Gastrocnemius medialis (tissue), 4 donors: ENCODE measurements at regions of chr20 and their contacts with region 1.

Region 1: DNA sequence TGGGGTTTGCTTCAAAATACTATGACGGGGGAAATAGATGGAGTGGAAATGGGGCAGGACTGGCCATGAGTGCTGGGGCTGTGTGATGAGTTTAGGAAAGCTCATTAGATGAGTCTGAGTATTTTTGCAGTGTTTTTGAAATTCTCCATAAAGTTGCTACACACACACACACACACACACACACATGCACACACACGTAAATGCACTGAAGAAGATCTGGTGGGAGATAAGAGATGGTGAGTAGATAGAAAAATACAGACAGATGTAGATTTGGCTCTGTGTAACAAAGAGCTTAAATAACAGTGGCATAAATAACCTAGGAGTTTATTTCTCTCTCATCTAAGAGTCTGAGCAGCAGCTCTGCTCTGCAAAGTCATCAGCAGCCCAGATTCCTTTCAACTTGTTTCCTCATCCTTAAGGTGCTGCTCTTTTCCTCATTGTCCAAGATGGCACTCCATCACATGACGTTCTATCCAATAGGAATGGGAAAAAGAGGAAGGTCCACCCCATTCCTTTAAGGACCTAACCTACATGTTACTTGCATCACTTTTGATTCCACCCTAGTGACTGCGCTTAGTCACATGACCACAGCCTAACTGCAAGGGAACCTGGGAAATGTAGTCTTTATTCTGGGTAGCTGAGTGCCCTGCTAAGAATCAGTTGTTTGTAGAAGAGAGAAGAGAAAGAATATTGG is 76.4 kb downstream of the EYA2 start:
- DNase-seq: no peak
- ATAC-seq: no peak
- H3K4me3 ChIP-seq: no peak overlapping the region
- H3K27ac ChIP-seq: no peak overlapping the region
- H3K4me1 ChIP-seq: no peaks in the 10 kb centered on the region
- H3K27me3 ChIP-seq: no peaks in the 10 kb centered on the region
- CTCF ChIP-seq: no peak
- POLR2A ChIP-seq: no peak

Region 2: DNA sequence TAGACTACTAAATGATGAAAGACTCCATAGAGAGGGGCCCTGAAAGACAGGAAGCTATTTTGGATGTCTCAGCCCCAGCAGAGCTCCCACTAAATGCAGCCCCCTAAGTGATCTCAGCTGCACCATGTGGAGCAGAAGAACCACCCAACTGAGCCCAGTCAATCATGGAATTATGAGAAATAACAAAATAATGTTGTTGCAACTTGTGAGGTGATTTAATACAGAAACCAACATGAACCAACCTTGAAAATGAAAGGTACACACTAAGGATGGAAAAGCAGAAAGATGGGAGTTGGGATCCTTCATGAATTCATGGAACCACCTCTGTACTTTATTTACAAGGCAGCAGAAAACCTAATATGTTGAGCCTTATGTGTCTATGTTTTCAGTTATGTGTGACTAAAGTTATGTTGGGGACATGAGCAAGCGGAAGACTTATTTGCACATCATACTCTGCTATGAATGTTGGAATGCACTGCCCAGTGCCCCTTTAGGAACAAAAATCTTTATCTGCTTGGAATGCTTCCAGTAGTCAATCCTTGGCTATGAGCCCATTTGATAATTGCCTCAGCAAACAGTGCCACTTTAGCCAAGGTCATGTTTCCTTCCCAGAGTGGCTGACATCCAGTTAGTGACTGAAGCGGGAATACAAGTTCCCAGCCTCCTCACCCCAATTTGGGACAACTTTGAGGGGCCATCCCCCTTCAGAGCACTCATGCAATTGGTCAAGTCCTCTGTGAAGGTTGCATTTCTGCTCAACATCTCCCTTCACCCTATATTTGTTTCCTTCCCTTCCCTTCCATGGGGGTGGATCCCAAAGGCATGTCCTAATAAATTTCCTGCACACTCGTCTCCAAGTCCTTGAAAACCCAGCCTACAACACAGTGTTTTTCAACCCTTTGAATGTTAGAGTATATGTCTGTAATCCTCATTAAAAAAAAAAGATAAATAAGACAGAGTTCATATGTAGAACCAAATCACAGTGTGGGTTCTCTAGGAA is 300.2 kb before region 1 on chr20:
- in situ Hi-C with region 1: no loop called
- intact Hi-C with region 1: no loop called
- DNase-seq: no peak
- ATAC-seq: no peak
- H3K4me3 ChIP-seq: no peak overlapping the region
- H3K27ac ChIP-seq: no peak overlapping the region
- H3K4me1 ChIP-seq: no peaks in the 10 kb centered on the region
- H3K27me3 ChIP-seq: no peaks in the 10 kb centered on the region
- CTCF ChIP-seq: no peak
- POLR2A ChIP-seq: no peak

Region 3: DNA sequence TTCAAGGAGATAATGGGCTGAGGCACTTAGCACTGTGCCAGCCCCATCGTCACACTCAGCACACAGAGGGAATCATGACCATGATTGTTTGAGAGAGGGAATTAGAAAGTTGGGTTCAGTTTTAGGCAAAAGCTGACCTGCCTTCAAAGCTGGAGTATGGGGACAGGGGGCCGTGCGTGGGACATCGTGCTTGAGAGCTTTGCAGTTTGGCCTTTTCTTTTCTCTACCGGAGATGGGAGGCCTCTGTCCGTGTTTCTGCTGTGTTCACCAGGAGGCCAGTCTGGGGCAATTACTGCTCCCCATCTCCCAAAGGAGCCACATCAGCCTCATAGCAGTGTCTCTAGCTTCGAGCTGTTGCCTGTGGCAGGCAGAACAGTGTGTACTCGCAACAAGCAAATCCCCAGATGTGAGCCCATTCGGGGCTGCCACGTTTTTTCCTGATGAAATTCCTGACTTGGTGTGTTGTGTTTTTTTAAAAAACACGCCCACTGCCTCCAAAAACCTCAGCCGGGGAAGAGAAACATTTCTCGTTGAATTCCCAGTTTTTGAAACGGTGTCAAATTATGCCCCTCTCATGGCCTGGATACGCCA is 56.2 kb before region 1 on chr20:
- in situ Hi-C with region 1: no loop called
- intact Hi-C with region 1: loop called (anchors 10 kb)
- DNase-seq: peak; percentile 62 to 77
- ATAC-seq: peak; percentile 79 to 86
- H3K4me3 ChIP-seq: no peak overlapping the region
- H3K27ac ChIP-seq: peak overlapping the region; percentile 28 to 71 (median 50)
- H3K4me1 ChIP-seq: no peaks in the 10 kb centered on the region
- H3K27me3 ChIP-seq: peaks cover 0 to 3% (median 0%) of the 10 kb centered on the region in 3 donors
- CTCF ChIP-seq: no peak
- POLR2A ChIP-seq: peak in 1 of 2 donors; percentile 11

Region 4: DNA sequence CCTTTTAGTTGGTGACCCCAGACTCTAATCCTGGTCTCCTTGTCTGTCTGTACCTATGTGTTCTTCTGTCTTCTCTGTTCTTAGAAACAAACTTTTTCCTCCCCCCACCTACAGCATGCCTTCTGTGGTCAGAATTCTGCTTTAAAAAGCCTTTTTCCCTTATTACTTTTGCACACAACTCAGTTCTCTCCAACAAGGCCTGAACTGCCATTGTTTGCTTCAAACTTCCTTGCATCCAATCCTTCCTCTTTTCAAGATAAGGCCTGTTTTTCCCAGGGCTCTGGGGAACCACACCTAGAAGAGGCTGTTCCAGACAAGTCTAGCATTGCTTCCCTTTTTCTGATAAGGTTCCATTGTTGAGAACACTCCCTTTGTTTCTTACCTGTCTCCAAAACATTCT is 508.4 kb after region 1 on chr20:
- in situ Hi-C with region 1: no loop called
- intact Hi-C with region 1: no loop called
- DNase-seq: no peak
- ATAC-seq: peak; percentile 27 to 70
- H3K4me3 ChIP-seq: no peak overlapping the region
- H3K27ac ChIP-seq: peak overlapping the region in 2 of 4 donors; percentile 14 to 59
- H3K4me1 ChIP-seq: no peaks in the 10 kb centered on the region
- H3K27me3 ChIP-seq: no peaks in the 10 kb centered on the region
- CTCF ChIP-seq: no peak
- POLR2A ChIP-seq: no peak